PC-9 (cell line): ENCODE measurements at regions of chr1 and their contacts with region 1.

Region 1: DNA sequence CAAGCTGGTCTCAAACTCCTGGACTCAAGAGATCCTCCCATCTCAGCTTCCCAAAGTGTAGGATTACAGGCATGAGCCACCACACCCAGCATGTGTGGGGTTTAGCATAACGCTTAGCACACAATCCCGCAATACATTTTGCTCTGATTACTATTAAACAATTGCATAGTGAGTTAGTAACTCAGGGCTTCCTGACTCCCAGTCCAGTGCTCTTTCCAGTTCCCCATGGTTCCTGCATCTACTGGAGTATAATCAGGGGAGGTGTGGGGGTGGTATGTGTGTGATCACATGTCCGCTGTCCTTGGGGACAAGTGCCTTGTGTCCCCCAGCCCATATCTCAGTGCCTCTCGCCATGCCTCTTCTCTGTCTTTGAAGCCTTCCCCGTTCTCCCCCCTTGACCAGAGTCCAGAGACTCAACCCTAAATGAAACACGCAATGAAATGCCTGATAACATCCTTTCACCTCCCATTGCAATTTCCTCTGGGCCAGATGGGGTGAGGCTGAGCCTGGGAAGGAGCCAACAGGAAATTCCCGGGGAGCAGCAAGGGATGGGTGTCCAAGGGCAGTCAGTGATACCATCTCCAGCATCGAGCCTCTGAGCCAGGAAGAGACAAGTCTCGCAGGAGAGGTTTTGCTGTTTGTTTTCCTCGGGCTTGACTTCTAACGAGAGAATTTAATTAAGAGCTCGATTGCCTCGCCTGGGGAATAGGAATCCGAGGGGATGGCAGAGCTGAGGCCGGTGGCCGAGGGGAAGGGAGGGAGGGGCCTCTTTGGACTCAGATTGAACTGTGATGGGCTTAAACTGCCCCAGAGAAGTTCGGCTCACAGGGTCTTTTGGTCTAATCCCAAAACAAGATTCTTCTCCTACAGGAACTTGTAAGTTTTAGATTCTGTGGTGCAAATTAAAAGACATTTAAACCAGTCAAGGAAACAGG is 7.7 kb upstream of the HTR1D start:
- DNase-seq: peak; percentile 43 to 78
- H3K4me3 ChIP-seq: no peak overlapping the region
- H3K27ac ChIP-seq: no peak overlapping the region
- H3K4me1 ChIP-seq: peaks cover 13% of the 10 kb centered on the region; the same call in 1 of the 2 replicates
- H3K27me3 ChIP-seq: no peaks in the 10 kb centered on the region
- CTCF ChIP-seq: no peak

Region 2: GRCh38 chr1:23273450-23274133 is 48.6 kb after region 1 on chr1:
- CTCF ChIA-PET with region 1: no interaction called
- POLR2A ChIA-PET with region 1: no interaction called
- intact Hi-C with region 1: loop called (anchors 5 kb)
- DNase-seq: peak; percentile 46 to 57
- H3K4me3 ChIP-seq: no peak overlapping the region
- H3K27ac ChIP-seq: no peak overlapping the region
- H3K4me1 ChIP-seq: peaks cover 24% of the 10 kb centered on the region
- H3K27me3 ChIP-seq: no peaks in the 10 kb centered on the region
- CTCF ChIP-seq: no peak

Region 3: DNA sequence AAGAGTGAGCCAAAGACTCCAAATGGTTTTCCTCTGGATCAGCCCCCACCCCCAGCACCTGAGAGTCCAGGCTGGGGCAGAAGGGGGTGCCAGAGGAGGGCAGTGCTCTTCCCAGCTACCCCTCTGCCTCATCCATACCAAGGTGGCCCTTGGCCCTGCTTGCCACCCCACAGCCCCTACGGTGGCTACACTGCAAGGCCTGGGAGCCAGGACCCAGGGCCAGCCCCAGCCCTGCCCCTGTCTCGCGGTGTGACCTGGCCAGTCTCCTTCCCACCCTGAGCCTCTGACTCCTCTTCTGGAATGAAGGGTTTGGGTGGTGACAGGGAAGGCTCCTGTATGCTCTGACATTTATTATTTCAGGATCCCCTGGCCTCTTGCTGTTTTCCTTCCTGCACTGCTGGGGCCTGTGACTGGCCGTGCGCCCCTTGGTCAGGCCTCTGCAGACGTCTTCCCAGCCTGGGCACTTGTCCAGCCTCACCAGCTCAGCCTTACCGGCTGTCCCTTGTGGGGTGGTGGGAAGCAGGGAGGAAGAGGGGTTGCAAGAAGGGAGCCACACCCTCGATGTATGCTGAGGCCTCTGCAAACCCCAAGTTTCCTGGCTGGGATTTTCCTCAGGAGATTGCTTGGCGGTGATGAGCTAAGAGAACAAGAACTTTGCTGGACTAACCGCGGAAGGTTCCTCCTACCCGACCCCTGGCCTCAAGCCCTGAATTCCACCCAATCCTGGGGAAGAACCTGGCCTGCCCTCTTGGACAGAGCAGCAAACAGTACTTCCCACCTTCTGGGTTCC is 245.5 kb after region 1 on chr1:
- CTCF ChIA-PET with region 1: interaction called, 10 read pairs
- POLR2A ChIA-PET with region 1: no interaction called
- intact Hi-C with region 1: no loop called
- DNase-seq: peak in 1 of 2 experiments; percentile 19
- H3K4me3 ChIP-seq: no peak overlapping the region
- H3K27ac ChIP-seq: no peak overlapping the region
- H3K4me1 ChIP-seq: peaks cover 21% of the 10 kb centered on the region
- H3K27me3 ChIP-seq: no peaks in the 10 kb centered on the region
- CTCF ChIP-seq: no peak

Region 4: DNA sequence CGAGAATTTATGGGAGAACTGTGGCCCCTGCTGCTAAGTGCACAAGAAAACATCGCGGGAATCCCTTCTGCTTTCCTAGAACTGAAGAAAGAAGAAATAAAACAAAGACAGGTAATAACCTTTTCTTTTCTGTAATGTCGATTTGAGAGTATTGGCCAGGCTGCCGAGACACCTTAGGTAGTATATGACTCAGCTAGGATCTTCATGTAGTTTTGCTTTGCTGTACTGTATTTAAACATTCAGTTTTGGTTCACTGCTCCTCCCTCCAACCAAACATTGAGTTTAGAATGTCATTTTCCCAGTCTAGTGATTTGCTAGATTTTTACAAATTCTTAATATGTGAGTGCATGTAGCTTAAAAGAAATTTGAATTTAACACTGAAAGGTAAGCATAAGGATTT is 1423.9 kb after region 1 on chr1:
- CTCF ChIA-PET with region 1: no interaction called
- POLR2A ChIA-PET with region 1: no interaction called
- intact Hi-C with region 1: no loop called
- DNase-seq: no peak
- H3K4me3 ChIP-seq: no peak overlapping the region
- H3K27ac ChIP-seq: no peak overlapping the region
- H3K4me1 ChIP-seq: peaks cover 15% of the 10 kb centered on the region
- H3K27me3 ChIP-seq: no peaks in the 10 kb centered on the region
- CTCF ChIP-seq: no peak